MCF 10A (cell line): ENCODE measurements at regions of chr3 and their contacts with region 1.

Region 1: DNA sequence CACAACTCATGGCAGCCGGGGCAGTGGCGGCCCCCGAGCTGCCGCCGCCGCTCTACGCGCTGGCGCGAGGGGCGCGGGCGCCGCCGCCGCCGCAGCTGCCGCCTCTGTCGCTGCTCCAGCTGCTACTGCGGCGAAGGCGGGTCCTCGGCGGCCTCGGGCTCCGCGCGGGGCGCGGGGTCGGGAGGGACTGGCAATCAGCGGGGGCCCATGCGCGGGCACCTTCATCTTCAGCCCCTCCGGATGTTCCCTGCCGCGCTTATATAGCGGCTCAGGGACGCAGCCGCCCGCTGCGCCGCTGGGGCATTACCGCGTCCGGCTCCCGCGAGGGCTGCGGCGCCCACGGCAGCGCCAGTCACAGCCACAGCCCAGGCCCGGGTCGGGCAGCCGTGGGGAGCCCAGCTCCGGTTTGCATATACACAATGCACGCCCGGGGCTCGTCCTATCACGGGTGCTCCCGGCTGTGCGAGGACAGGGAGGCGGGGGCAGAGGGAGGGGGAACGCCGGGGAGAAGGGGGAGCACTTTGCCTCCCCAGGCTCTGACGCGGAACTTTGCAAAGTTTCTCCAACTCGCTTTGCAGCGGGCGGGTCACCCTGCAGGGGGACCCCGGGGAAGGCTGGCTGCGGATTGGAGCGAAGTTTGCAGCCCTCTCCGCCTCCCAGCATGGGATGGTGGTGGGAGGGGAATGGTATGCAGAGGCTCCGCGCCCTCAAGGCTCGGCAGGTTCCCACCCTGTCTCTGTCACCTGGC is at the start of gene VGLL3:
- DNase-seq: peak; percentile 80
- H3K4me3 Mint-ChIP-seq: peak within 1 kb of the TSS; percentile 82
- H3K27ac Mint-ChIP-seq: peak within 1 kb of the TSS; percentile 87
- H3K4me1 Mint-ChIP-seq: peaks cover 32% of the 10 kb centered on the region
- H3K27me3 Mint-ChIP-seq: no peaks in the 10 kb centered on the region
- CTCF ChIP-seq: no peak
- total RNA-seq, gene VGLL3: 6.3 and 12.2 TPM in 2 replicates

Region 2: GRCh38 chr3:86740751-86741150 is 250.2 kb before region 1 on chr3:
- CTCF ChIA-PET with region 1: no interaction called
- POLR2A ChIA-PET with region 1: no interaction called
- intact Hi-C with region 1: no loop called
- DNase-seq: no peak
- H3K4me3 Mint-ChIP-seq: no peak overlapping the region
- H3K27ac Mint-ChIP-seq: no peak overlapping the region
- H3K4me1 Mint-ChIP-seq: no peaks in the 10 kb centered on the region
- H3K27me3 Mint-ChIP-seq: no peaks in the 10 kb centered on the region
- CTCF ChIP-seq: no peak

Region 3: GRCh38 chr3:86923071-86923491 is 67.8 kb before region 1 on chr3:
- CTCF ChIA-PET with region 1: no interaction called
- POLR2A ChIA-PET with region 1: interaction called, 14 read pairs
- intact Hi-C with region 1: no loop called
- DNase-seq: peak; percentile 95
- H3K4me3 Mint-ChIP-seq: peak overlapping the region; percentile 62
- H3K27ac Mint-ChIP-seq: peak overlapping the region; percentile 97
- H3K4me1 Mint-ChIP-seq: peaks cover 28% of the 10 kb centered on the region
- H3K27me3 Mint-ChIP-seq: no peaks in the 10 kb centered on the region
- CTCF ChIP-seq: no peak

Region 4: DNA sequence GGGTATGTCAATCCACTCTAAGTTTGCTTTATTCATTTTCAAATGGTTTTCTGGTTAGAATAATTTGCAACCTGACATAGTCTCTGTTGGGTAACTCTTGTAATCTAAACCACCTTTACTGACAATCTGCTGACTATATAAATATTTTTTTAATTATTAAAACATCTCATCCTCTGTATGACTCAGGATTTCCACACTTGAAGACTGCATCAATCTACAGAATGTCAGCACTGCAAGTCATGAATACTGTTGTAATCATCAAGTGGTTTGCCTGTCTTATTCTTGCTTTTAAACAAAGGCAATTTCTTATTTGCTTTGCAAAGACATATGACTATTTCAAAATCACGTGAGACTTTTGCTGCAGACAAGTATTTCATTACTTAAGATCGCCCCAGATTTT is 42.1 kb before region 1 on chr3:
- CTCF ChIA-PET with region 1: no interaction called
- POLR2A ChIA-PET with region 1: interaction called, 27 read pairs
- intact Hi-C with region 1: loop called (anchors 2 kb)
- DNase-seq: peak; percentile 89
- H3K4me3 Mint-ChIP-seq: peak overlapping the region; percentile 38
- H3K27ac Mint-ChIP-seq: peak overlapping the region; percentile 75
- H3K4me1 Mint-ChIP-seq: peaks cover 45% of the 10 kb centered on the region
- H3K27me3 Mint-ChIP-seq: no peaks in the 10 kb centered on the region
- CTCF ChIP-seq: no peak

Region 5: DNA sequence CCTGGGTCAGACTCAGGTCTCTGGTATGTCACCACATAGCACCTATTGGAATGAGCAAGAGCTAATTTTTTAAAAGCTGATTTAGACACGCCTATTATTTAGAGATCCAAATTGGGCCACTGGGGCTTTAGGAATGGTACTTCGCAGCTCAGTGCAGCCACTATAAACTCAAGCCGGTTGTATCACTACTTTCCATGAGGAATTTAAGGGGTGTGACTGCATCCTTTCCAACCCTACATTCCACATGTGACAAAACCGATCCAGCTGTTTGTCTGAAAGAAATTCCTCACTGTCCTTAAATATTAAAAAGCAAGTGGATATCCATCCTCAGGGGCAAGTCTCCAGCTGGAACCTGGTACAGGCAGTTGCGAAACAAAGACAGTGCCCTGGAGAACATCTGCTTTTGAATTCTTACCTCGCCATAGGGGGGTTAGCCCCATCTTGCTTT is 12.8 kb before region 1 on chr3:
- CTCF ChIA-PET with region 1: interaction called, 9 read pairs
- POLR2A ChIA-PET with region 1: interaction called, 24 read pairs
- intact Hi-C with region 1: loop called (anchors 2 kb)
- DNase-seq: no peak
- H3K4me3 Mint-ChIP-seq: no peak overlapping the region
- H3K27ac Mint-ChIP-seq: no peak overlapping the region
- H3K4me1 Mint-ChIP-seq: peaks cover 15% of the 10 kb centered on the region
- H3K27me3 Mint-ChIP-seq: no peaks in the 10 kb centered on the region
- CTCF ChIP-seq: no peak

Region 6: GRCh38 chr3:87227104-87227834 is 236.4 kb after region 1 on chr3 and contains the start of gene CHMP2B:
- CTCF ChIA-PET with region 1: no interaction called
- POLR2A ChIA-PET with region 1: interaction called, 18 read pairs
- intact Hi-C with region 1: loop called (anchors 10 kb)
- DNase-seq: peak; percentile 93
- H3K4me3 Mint-ChIP-seq: peak within 1 kb of the TSS; percentile 97
- H3K27ac Mint-ChIP-seq: peak within 1 kb of the TSS; percentile 99
- H3K4me1 Mint-ChIP-seq: peaks cover 29% of the 10 kb centered on the region
- H3K27me3 Mint-ChIP-seq: no peaks in the 10 kb centered on the region
- CTCF ChIP-seq: no peak
- total RNA-seq, gene CHMP2B: 45.5 and 62.2 TPM in 2 replicates